Heart left ventricle (tissue), 16 donors: ENCODE measurements at regions of chr2 and their contacts with region 1.

Region 1: GRCh38 chr2:18560031-18560796 is at the start of gene RDH14:
- DNase-seq: peak; percentile 95 to 97 (median 96)
- ATAC-seq: peak; percentile 97 to 98 (median 98)
- H3K4me3 ChIP-seq: peak within 1 kb of the TSS; percentile 66 to 93 (median 86)
- H3K27ac ChIP-seq: peak within 1 kb of the TSS; percentile 96 to 99 (median 98)
- H3K4me1 ChIP-seq: peaks cover 7 to 47% (median 26%) of the 10 kb centered on the region in 12 donors
- H3K27me3 ChIP-seq: no peaks in the 10 kb centered on the region
- CTCF ChIP-seq: peak in 3 of 12 donors; percentile 18 to 26 (median 18)
- POLR2A ChIP-seq: peak; percentile 3 to 81
- total RNA-seq, gene RDH14: 40.0 to 70.7 (median 49.0) TPM

Region 2: GRCh38 chr2:18311420-18312195 is 248.6 kb before region 1 on chr2:
- intact Hi-C with region 1: no loop called
- DNase-seq: no peak
- ATAC-seq: peak in 2 of 4 donors; percentile 52 to 73
- H3K4me3 ChIP-seq: peak overlapping the region in 4 of 12 donors; percentile 16 to 38 (median 28)
- H3K27ac ChIP-seq: peak overlapping the region in 5 of 12 donors; percentile 10 to 68 (median 24)
- H3K4me1 ChIP-seq: peaks cover 0 to 4% (median 0%) of the 10 kb centered on the region in 12 donors
- H3K27me3 ChIP-seq: no peaks in the 10 kb centered on the region
- CTCF ChIP-seq: no peak
- POLR2A ChIP-seq: no peak

Region 3: GRCh38 chr2:18527326-18527725 is 32.9 kb before region 1 on chr2:
- intact Hi-C with region 1: loop called in 4 of 10 experiments (anchors 2 to 5 kb)
- DNase-seq: no peak
- ATAC-seq: no peak
- H3K4me3 ChIP-seq: no peak overlapping the region
- H3K27ac ChIP-seq: peak overlapping the region in 9 of 12 donors; percentile 42 to 88 (median 81)
- H3K4me1 ChIP-seq: peaks cover 0 to 32% (median 12%) of the 10 kb centered on the region in 12 donors
- H3K27me3 ChIP-seq: no peaks in the 10 kb centered on the region
- CTCF ChIP-seq: no peak
- POLR2A ChIP-seq: no peak

Region 4: DNA sequence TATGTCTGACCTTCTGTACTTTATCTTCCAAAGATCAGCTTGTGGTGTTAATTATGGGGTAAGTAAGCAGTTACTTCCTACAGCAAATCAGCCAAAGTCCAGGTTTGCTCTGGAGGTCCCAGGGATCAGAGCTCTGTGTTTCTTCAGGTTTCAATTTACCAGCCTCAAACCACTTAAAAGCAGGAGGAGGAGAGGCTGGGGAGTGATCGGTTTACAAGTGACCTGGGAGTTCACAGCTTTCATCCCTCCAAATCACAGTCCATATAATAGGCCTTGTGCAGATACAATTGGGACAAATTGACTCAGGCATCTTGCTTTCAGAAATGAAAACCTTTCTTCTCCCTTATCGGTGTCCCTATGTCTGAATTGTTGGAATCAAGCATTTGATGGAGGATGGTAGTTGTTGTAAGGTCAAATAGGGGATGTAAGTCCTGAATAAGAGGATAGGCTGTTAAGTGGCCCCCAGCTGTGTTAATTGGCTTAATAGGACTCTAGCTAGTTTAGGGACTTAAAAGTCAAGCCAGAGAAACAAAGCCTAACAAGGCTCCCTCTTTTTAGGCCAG is 217.1 kb after region 1 on chr2:
- intact Hi-C with region 1: no loop called
- DNase-seq: no peak
- ATAC-seq: no peak
- H3K4me3 ChIP-seq: no peak overlapping the region
- H3K27ac ChIP-seq: no peak overlapping the region
- H3K4me1 ChIP-seq: peaks cover 0 to 3% (median 0%) of the 10 kb centered on the region in 12 donors
- H3K27me3 ChIP-seq: no peaks in the 10 kb centered on the region
- CTCF ChIP-seq: no peak
- POLR2A ChIP-seq: no peak

Region 5: GRCh38 chr2:19901442-19902215 is 1341.4 kb after region 1 on chr2 and contains the start of gene TTC32:
- intact Hi-C with region 1: loop called in 1 of 10 experiments (anchors 10 kb)
- DNase-seq: peak; percentile 94 to 96 (median 95)
- ATAC-seq: peak; percentile 96 to 98 (median 98)
- H3K4me3 ChIP-seq: peak within 1 kb of the TSS; percentile 75 to 97 (median 84)
- H3K27ac ChIP-seq: peak within 1 kb of the TSS; percentile 91 to 98 (median 96)
- H3K4me1 ChIP-seq: peaks cover 0 to 49% (median 34%) of the 10 kb centered on the region in 12 donors
- H3K27me3 ChIP-seq: no peaks in the 10 kb centered on the region
- CTCF ChIP-seq: peak in 2 of 12 donors; percentile 14 to 16
- POLR2A ChIP-seq: peak in 1 of 2 donors; percentile 67
- total RNA-seq, gene TTC32: 2.6 to 9.8 (median 6.3) TPM